K562 (cell line): ENCODE measurements at regions of chr4 and their contacts with region 1.

Region 1: GRCh38 chr4:15956179-15956850 is 6.7 kb downstream of the FGFBP2 start:
- DNase-seq: peak; percentile 73 to 77 (median 74)
- ATAC-seq: peak; percentile 97
- H3K4me3 ChIP-seq: no peak overlapping the region
- H3K27ac ChIP-seq: no peak overlapping the region
- H3K4me1 ChIP-seq: no peaks in the 10 kb centered on the region
- H3K27me3 ChIP-seq: no peaks in the 10 kb centered on the region; a peak in 1 of 5 replicates
- CTCF ChIP-seq: peak; percentile 80 to 90 (median 87)
- EP300 ChIP-seq: no peak
- POLR2A ChIP-seq: no peak
- RAD21 ChIP-seq: peak; percentile 77 to 84

Region 2: GRCh38 chr4:15551740-15552446 is 404.4 kb before region 1 on chr4:
- CTCF ChIA-PET with region 1: no interaction called
- POLR2A ChIA-PET with region 1: no interaction called
- in situ Hi-C with region 1: no loop called
- intact Hi-C with region 1: no loop called
- DNase-seq: no peak
- ATAC-seq: no peak
- H3K4me3 ChIP-seq: no peak overlapping the region
- H3K27ac ChIP-seq: no peak overlapping the region
- H3K4me1 ChIP-seq: no peaks in the 10 kb centered on the region
- H3K27me3 ChIP-seq: no peaks in the 10 kb centered on the region
- CTCF ChIP-seq: no peak
- EP300 ChIP-seq: no peak
- POLR2A ChIP-seq: no peak
- RAD21 ChIP-seq: no peak

Region 3: GRCh38 chr4:15729910-15730533 is 226.3 kb before region 1 on chr4:
- CTCF ChIA-PET with region 1: interaction called, 3 read pairs
- POLR2A ChIA-PET with region 1: interaction called, 3 read pairs
- in situ Hi-C with region 1: no loop called
- intact Hi-C with region 1: loop called (anchors 1 kb)
- DNase-seq: peak; percentile 52 to 59 (median 56)
- ATAC-seq: peak; percentile 82
- H3K4me3 ChIP-seq: no peak overlapping the region
- H3K27ac ChIP-seq: no peak overlapping the region
- H3K4me1 ChIP-seq: no peaks in the 10 kb centered on the region
- H3K27me3 ChIP-seq: peaks cover 9 to 11% of the 10 kb centered on the region in 2 experiments; a peak in 4 of 5 replicates
- CTCF ChIP-seq: peak; percentile 53 to 80 (median 65)
- EP300 ChIP-seq: no peak
- POLR2A ChIP-seq: no peak
- RAD21 ChIP-seq: peak; percentile 51 to 65

Region 4: DNA sequence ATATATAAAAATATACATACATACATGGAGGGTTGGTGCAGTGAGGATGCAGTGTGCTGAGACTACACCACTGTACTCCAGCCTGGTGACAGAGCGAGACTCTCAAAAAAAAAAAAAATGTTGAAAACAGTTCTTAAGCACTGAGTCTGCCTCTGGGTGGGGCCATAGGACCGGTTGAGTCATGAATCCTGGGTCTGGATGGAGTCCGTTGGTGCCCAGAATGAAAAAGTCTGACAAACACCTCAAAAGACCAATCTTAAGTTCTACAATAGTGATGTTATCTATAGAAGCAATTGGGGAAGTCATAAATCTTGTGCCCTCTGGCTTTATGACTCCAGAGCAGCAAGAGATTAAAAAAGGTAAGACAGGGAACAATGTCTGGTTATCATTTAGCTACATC is 88.2 kb before region 1 on chr4:
- CTCF ChIA-PET with region 1: no interaction called
- POLR2A ChIA-PET with region 1: no interaction called
- in situ Hi-C with region 1: no loop called
- intact Hi-C with region 1: loop called (anchors 5 kb)
- DNase-seq: peak in 1 of 4 experiments; percentile 18
- ATAC-seq: peak; percentile 80
- H3K4me3 ChIP-seq: no peak overlapping the region
- H3K27ac ChIP-seq: no peak overlapping the region
- H3K4me1 ChIP-seq: no peaks in the 10 kb centered on the region
- H3K27me3 ChIP-seq: no peaks in the 10 kb centered on the region
- CTCF ChIP-seq: peak in 2 of 3 experiments; percentile 10 to 30; a peak in 2 of 6 replicates
- EP300 ChIP-seq: no peak
- POLR2A ChIP-seq: no peak
- RAD21 ChIP-seq: no peak

Region 5: DNA sequence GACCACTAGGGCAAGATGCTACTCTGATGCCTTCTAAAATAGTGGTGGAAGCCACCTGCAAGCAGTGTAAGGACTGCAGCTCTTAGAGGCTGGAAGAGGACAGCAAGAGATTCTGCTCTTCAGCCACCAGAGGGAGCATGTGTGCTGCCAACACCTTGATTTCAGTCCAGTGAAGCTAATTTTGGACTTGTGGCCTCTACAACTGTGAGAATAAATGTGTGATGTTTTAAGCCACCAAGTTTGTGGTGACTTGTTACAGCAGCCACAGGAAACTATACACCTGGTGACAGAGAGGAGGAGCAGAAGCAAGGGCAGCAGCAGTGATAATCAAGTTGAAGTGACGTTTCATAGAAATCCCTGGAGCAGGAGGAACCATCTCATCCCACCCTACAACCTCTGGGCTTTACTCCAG is 73.6 kb before region 1 on chr4:
- CTCF ChIA-PET with region 1: interaction called, 10 read pairs
- POLR2A ChIA-PET with region 1: no interaction called
- in situ Hi-C with region 1: no loop called
- intact Hi-C with region 1: loop called (anchors 1 kb)
- DNase-seq: peak; percentile 44 to 70 (median 50)
- ATAC-seq: peak; percentile 96
- H3K4me3 ChIP-seq: no peak overlapping the region
- H3K27ac ChIP-seq: no peak overlapping the region
- H3K4me1 ChIP-seq: no peaks in the 10 kb centered on the region
- H3K27me3 ChIP-seq: no peaks in the 10 kb centered on the region; a peak in 1 of 5 replicates
- CTCF ChIP-seq: peak; percentile 76 to 78 (median 78)
- EP300 ChIP-seq: no peak
- POLR2A ChIP-seq: no peak
- RAD21 ChIP-seq: peak; percentile 49 to 67